Activated CD4-positive, alpha-beta T cell treated with anti-CD3 and anti-CD28 coated beads for 36 hours (primary cell): ENCODE measurements at regions of chr15 and their contacts with region 1.

Region 1: DNA sequence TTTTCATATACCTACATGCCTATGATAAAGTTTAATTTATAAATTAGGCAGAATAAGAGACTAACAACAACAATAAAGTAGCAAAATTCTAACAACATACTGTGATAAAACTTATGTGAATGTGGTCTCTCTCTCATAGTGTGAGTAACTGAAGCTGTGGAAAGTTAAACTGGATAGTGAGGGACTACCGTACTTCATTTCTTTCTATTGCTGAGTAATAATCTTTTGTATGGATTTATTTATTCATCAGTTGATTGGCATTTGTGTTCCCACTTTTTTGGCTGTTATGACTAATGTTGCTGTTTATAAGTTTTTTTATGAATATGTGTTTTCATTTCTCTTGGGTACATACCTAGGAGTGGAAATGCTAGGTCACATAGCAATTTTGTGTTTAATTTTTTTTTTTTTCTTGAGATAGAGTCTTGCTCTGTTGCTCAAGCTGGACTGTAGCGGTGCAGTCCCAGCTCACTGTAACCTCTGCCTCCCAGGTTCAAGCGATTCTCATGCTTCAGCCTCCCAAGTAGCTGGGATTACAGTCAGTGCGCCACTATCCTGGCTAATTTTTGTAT is 41.0 kb downstream of the RNF111 start:
- DNase-seq: no peak
- ATAC-seq: peak; percentile 75
- H3K4me3 Mint-ChIP-seq: no peak overlapping the region
- H3K27ac Mint-ChIP-seq: no peak overlapping the region
- H3K4me1 Mint-ChIP-seq: peaks cover 38% of the 10 kb centered on the region
- H3K27me3 Mint-ChIP-seq: no peaks in the 10 kb centered on the region

Region 2: GRCh38 chr15:59039225-59039624 is 10.8 kb after region 1 on chr15:
- CTCF ChIA-PET with region 1: interaction called, 4 read pairs
- POLR2A ChIA-PET with region 1: no interaction called
- intact Hi-C with region 1: loop called in 1 of 2 experiments (anchors 1 kb)
- DNase-seq: no peak
- ATAC-seq: peak; percentile 76
- H3K4me3 Mint-ChIP-seq: no peak overlapping the region
- H3K27ac Mint-ChIP-seq: peak overlapping the region; percentile 69
- H3K4me1 Mint-ChIP-seq: peaks cover 55% of the 10 kb centered on the region
- H3K27me3 Mint-ChIP-seq: no peaks in the 10 kb centered on the region

Region 3: GRCh38 chr15:59339252-59339672 is 310.8 kb after region 1 on chr15:
- CTCF ChIA-PET with region 1: no interaction called
- POLR2A ChIA-PET with region 1: no interaction called
- intact Hi-C with region 1: no loop called
- DNase-seq: no peak
- ATAC-seq: no peak
- H3K4me3 Mint-ChIP-seq: no peak overlapping the region
- H3K27ac Mint-ChIP-seq: no peak overlapping the region
- H3K4me1 Mint-ChIP-seq: no peaks in the 10 kb centered on the region
- H3K27me3 Mint-ChIP-seq: peaks cover 2% of the 10 kb centered on the region